Activated B cell treated with CpG ODN at 0.5 μM for 24 hours (primary cell): ENCODE measurements at regions of chr10 and their contacts with region 1.

Region 1: GRCh38 chr10:5889624-5890451 is at the starts of genes ANKRD16 and FBH1:
- DNase-seq: peak; percentile 100
- ATAC-seq: peak; percentile 85
- H3K4me3 Mint-ChIP-seq: peak within 1 kb of the TSS; percentile 87
- H3K27ac Mint-ChIP-seq: peak within 1 kb of the TSS; percentile 78
- H3K4me1 Mint-ChIP-seq: peaks cover 59% of the 10 kb centered on the region
- H3K27me3 Mint-ChIP-seq: no peaks in the 10 kb centered on the region
- CTCF ChIP-seq: no peak
- total RNA-seq, gene ANKRD16: 9.2 and 11.1 TPM in 2 replicates
- total RNA-seq, gene FBH1: 65.5 and 68.7 TPM in 2 replicates

Region 2: GRCh38 chr10:5254488-5254887 is 635.4 kb before region 1 on chr10:
- CTCF ChIA-PET with region 1: no interaction called
- POLR2A ChIA-PET with region 1: no interaction called
- intact Hi-C with region 1: no loop called
- DNase-seq: no peak
- ATAC-seq: no peak
- H3K4me3 Mint-ChIP-seq: no peak overlapping the region
- H3K27ac Mint-ChIP-seq: no peak overlapping the region
- H3K4me1 Mint-ChIP-seq: no peaks in the 10 kb centered on the region
- H3K27me3 Mint-ChIP-seq: no peaks in the 10 kb centered on the region
- CTCF ChIP-seq: no peak

Region 3: DNA sequence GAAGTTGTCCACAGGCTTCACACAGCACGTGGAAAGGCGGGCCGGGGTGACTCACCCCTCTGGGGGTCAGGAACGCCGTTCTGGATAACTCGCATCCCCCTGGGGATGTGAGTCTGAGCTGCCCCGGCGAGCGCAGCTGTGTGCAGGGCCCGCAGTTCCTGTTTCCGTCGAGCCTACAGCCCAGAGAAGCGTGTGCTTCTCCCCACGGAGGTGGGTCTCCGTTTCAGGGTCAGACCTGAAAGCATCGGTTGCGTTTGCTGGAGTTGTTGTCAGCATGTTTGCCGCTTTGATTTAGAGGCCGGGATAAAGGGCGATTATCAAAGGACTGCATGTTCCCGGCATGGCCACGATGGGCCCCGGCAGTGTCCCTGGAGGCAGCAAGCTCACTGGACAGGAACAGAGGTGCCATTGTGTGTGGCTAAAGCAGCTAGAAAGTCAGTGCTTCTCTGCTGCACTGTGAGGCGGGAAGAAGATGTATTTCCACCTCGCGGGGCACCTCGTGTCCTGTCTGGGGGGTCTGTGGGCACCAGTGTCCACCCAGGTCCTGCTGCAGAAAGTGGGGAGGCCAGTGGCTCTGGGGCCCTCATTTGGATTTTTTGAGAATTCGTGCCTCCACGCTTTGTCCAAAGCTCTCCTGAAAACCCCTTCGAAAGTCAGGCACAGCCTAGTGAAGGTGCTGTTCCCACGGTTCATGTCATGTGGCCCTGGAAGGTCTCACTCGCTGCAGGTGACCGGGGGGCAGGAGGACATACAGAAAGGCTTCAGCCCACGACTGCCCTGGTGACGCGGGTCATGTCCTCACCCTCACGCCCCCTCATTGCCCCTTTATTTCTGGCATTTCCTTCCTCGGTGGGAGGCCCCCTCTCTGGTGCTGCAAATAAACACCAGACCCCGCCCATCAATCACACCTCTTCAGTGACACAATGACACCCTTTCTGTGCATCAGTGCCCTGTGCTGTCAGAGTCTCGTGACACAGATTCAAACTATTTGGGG is 49.2 kb before region 1 on chr10:
- CTCF ChIA-PET with region 1: no interaction called
- POLR2A ChIA-PET with region 1: interaction called, 29 read pairs
- intact Hi-C with region 1: loop called (anchors 1 kb)
- DNase-seq: peak; percentile 78
- ATAC-seq: peak; percentile 83
- H3K4me3 Mint-ChIP-seq: peak overlapping the region; percentile 84
- H3K27ac Mint-ChIP-seq: peak overlapping the region; percentile 98
- H3K4me1 Mint-ChIP-seq: peaks cover 79% of the 10 kb centered on the region
- H3K27me3 Mint-ChIP-seq: no peaks in the 10 kb centered on the region
- CTCF ChIP-seq: no peak